WTC11 (cell line): ENCODE measurements at regions of chr1 and their contacts with region 1.

Region 1: GRCh38 chr1:147599362-147600118 is 58.2 kb downstream of the BCL9 start:
- DNase-seq: peak; percentile 98
- ATAC-seq: peak; percentile 87
- H3K4me3 Mint-ChIP-seq: peak overlapping the region; percentile 83
- H3K27ac Mint-ChIP-seq: no peak overlapping the region
- H3K4me1 Mint-ChIP-seq: peaks cover 46% of the 10 kb centered on the region
- H3K27me3 Mint-ChIP-seq: peaks cover 13% of the 10 kb centered on the region
- CTCF ChIP-seq: no peak

Region 2: DNA sequence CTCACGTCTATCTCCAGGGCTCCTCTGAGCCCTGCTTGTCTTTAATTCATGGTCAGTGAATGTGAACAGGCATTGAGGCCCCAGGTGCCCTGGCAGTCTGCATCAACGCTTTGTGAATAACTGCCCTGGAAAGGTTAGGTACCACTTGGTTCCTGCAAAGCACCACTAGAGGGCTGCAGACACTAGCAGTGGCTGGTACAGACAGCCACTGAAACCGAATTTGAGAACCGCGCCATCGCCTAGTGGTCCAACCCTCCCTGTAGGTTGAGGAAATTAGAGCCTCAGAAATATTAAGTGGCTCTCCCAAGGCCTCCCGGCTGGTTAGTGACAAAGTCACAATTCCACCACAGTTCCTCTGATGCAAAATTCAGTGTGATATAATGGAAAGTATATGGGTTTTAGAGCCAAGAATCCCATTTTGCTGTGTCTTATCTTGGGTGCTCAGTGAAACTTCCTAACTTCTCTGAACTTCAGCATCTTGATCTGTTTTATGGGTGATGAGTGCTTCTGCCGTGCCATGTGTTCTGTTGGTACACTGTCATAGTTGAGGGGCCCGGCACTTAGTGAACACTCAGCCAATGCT is 104.5 kb before region 1 on chr1:
- CTCF ChIA-PET with region 1: interaction called, 12 read pairs
- POLR2A ChIA-PET with region 1: interaction called, 6 read pairs
- DNase-seq: peak; percentile 79
- ATAC-seq: peak; percentile 93
- H3K4me3 Mint-ChIP-seq: no peak overlapping the region
- H3K27ac Mint-ChIP-seq: no peak overlapping the region
- H3K4me1 Mint-ChIP-seq: peaks cover 3% of the 10 kb centered on the region; the same call in 1 of the 2 replicates
- H3K27me3 Mint-ChIP-seq: peaks cover 2% of the 10 kb centered on the region
- CTCF ChIP-seq: peak; percentile 78

Region 3: DNA sequence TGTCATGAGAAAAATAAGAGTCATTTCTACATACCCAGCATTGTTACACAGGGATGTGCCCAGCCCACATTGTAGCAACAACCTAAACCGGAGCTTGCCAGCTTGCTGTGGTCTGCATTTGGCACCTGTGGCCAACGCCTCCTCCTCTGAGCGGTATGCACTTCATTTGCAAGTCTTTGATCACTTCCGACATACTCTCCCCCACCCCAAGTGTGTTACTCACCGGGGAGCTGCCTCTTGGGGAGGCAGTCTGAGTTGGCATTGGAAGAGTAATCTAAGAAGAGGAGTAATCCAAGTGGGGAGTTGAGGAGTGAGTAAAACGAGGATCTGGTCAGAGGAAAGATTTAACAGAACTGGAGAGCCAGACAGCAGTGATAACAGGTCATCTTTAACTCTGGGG is 54.4 kb before region 1 on chr1:
- CTCF ChIA-PET with region 1: interaction called, 31 read pairs
- POLR2A ChIA-PET with region 1: interaction called, 72 read pairs
- DNase-seq: peak; percentile 63
- ATAC-seq: 0 out of 2 replicates have a peak, but pooled peaks have one; percentile 2
- H3K4me3 Mint-ChIP-seq: peak overlapping the region; percentile 51
- H3K27ac Mint-ChIP-seq: peak overlapping the region; percentile 57
- H3K4me1 Mint-ChIP-seq: peaks cover 66% of the 10 kb centered on the region
- H3K27me3 Mint-ChIP-seq: no peaks in the 10 kb centered on the region; the same call in 1 of the 2 replicates
- CTCF ChIP-seq: no peak

Region 4: DNA sequence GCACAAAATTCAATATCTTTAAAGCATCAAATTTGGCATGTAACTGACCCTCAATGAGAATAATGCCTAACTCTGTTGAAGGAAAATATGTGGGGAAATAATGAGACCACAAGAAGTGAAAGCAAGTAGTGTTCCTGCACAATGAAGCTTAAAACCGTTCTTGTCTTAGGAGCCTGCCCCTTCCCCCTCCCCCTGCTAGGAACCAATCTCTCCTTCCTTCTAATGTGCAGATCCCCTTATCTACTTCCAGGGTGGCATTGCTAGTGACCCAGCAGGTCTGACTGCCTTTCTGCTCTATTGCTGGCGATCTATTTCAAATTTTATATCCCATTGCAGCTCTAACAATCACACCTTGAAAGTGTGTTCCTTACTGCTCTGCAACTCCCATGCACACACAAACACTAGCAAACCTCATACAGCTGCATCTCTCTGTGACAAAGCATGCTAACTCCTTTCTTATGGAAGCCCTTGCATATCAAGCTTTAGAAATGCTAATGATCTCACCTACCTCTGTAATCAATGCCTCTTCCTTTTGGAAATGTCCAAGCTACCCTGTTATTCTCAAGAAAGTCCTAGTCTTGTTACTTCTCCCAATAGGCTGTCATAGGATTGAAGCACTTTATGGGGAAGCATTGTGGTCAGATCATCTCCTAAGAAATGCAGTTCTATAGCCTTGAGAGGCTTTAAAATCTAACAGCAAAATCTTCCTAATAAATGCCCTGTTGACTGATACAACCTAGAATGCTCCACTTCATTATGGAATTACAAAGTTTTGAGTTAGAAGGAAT is 31.8 kb before region 1 on chr1:
- CTCF ChIA-PET with region 1: interaction called, 4 read pairs
- POLR2A ChIA-PET with region 1: interaction called, 14 read pairs
- DNase-seq: no peak
- ATAC-seq: peak; percentile 95
- H3K4me3 Mint-ChIP-seq: peak overlapping the region; percentile 66
- H3K27ac Mint-ChIP-seq: peak overlapping the region; percentile 99
- H3K4me1 Mint-ChIP-seq: peaks cover 78% of the 10 kb centered on the region
- H3K27me3 Mint-ChIP-seq: no peaks in the 10 kb centered on the region
- CTCF ChIP-seq: no peak

Region 5: GRCh38 chr1:147585640-147586383 is 13.7 kb before region 1 on chr1:
- CTCF ChIA-PET with region 1: interaction called, 5 read pairs
- POLR2A ChIA-PET with region 1: interaction called, 10 read pairs
- DNase-seq: no peak
- ATAC-seq: no peak
- H3K4me3 Mint-ChIP-seq: no peak overlapping the region
- H3K27ac Mint-ChIP-seq: no peak overlapping the region
- H3K4me1 Mint-ChIP-seq: peaks cover 15% of the 10 kb centered on the region
- H3K27me3 Mint-ChIP-seq: peaks cover 10% of the 10 kb centered on the region
- CTCF ChIP-seq: no peak